ENCODE measurements at regions of chr4 and their contacts with region 1.

Region 1: GRCh38 chr4:150297861-150298474 is 219.7 kb downstream of the DCLK2 start:
- DNase-seq: peak; percentile 49 to 77 (median 72)
- H3K4me3 ChIP-seq: no peak overlapping the region
- H3K27ac ChIP-seq: no peak overlapping the region
- H3K4me1 ChIP-seq: no peaks in the 10 kb centered on the region
- H3K27me3 ChIP-seq: no peaks in the 10 kb centered on the region

Region 2: GRCh38 chr4:150310159-150310895 is 12.4 kb after region 1 on chr4:
- CTCF ChIA-PET with region 1: interaction called, 27 read pairs
- POLR2A ChIA-PET with region 1: no interaction called
- DNase-seq: no peak
- H3K4me3 ChIP-seq: no peak overlapping the region
- H3K27ac ChIP-seq: no peak overlapping the region
- H3K4me1 ChIP-seq: peaks cover 0 to 9% (median 0%) of the 10 kb centered on the region in 4 experiments
- H3K27me3 ChIP-seq: no peaks in the 10 kb centered on the region

Region 3: DNA sequence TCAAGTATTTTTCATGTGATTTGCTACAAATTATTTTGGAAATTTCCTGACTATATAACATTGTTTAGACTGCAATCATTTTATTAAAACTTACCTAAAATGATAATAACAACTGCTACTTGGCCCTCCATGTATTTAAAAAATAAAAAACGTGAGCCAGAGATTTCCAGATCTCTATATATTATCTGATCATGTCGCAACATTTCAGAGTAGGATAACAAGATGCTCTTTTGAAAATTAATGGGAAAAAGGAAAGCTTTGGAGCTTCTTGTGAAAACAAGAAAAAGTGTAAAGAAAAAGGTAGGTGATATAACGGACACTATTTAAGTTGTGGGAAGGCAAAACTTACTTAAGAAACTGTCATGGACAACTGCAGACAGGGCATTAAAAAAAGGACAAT is 269.1 kb after region 1 on chr4:
- CTCF ChIA-PET with region 1: no interaction called
- POLR2A ChIA-PET with region 1: no interaction called
- DNase-seq: no peak
- H3K4me3 ChIP-seq: no peak overlapping the region
- H3K27ac ChIP-seq: no peak overlapping the region
- H3K4me1 ChIP-seq: no peaks in the 10 kb centered on the region
- H3K27me3 ChIP-seq: no peaks in the 10 kb centered on the region

Region 4: GRCh38 chr4:150578745-150579501 is 281.0 kb after region 1 on chr4:
- CTCF ChIA-PET with region 1: no interaction called
- POLR2A ChIA-PET with region 1: no interaction called
- DNase-seq: no peak
- H3K4me3 ChIP-seq: no peak overlapping the region
- H3K27ac ChIP-seq: no peak overlapping the region
- H3K4me1 ChIP-seq: no peaks in the 10 kb centered on the region
- H3K27me3 ChIP-seq: no peaks in the 10 kb centered on the region

Region 5: GRCh38 chr4:150867148-150867547 is 569.2 kb after region 1 on chr4:
- CTCF ChIA-PET with region 1: interaction called, 21 read pairs
- POLR2A ChIA-PET with region 1: no interaction called
- DNase-seq: peak; percentile 88 to 94 (median 93)
- H3K4me3 ChIP-seq: no peak overlapping the region
- H3K27ac ChIP-seq: no peak overlapping the region
- H3K4me1 ChIP-seq: peaks cover 0 to 1% (median 0%) of the 10 kb centered on the region in 4 experiments
- H3K27me3 ChIP-seq: no peaks in the 10 kb centered on the region